Activated CD4-positive, alpha-beta T cell treated with anti-CD3 and anti-CD28 coated beads, Interleukin-2, amount 10 ng/mL, durations not matched to agents 24 days and 14 days (primary cell): ENCODE measurements at regions of chr17 and their contacts with region 1.

Region 1: DNA sequence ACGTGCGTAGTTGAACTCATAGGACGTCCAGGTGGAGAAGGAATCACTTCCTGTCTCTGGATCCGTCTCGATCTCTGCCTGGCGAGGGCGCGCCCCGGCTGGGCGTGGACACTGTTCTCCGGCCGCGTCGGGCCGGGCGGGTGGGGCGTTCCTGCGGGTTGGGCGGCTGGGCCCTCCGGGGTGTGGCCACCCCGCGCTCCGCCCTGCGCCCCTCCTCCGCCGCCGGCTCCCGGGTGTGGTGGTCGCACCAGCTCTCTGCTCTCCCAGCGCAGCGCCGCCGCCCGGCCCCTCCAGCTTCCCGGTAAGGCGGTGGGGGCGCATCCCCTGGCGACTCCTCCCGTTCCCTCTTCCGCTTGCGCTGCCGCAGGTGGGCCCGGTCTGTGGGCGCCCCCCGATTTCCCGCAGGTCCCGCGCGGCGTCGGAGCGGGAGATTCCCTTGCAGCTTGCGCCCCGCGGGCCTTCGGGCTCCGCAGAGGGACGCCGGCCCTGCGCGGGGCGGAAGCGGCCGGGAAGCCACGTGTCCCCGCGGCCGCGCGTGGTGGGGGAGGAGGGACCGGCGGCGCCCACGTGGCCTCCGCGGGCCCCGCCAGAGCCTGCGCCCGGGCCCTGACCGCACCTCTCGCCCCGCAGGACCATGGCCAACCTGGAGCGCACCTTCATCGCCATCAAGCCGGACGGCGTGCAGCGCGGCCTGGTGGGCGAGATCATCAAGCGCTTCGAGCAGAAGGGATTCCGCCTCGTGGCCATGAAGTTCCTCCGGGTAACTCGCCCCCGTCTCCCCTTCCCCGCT is at the start of gene NME2:
- DNase-seq: peak; percentile 94
- H3K4me3 Mint-ChIP-seq: peak within 1 kb of the TSS; percentile 88
- H3K27ac Mint-ChIP-seq: peak within 1 kb of the TSS; percentile 97
- H3K4me1 Mint-ChIP-seq: peaks cover 30% of the 10 kb centered on the region
- H3K27me3 Mint-ChIP-seq: no peaks in the 10 kb centered on the region
- total RNA-seq, gene NME2: 752 and 795 TPM in 2 replicates

Region 2: DNA sequence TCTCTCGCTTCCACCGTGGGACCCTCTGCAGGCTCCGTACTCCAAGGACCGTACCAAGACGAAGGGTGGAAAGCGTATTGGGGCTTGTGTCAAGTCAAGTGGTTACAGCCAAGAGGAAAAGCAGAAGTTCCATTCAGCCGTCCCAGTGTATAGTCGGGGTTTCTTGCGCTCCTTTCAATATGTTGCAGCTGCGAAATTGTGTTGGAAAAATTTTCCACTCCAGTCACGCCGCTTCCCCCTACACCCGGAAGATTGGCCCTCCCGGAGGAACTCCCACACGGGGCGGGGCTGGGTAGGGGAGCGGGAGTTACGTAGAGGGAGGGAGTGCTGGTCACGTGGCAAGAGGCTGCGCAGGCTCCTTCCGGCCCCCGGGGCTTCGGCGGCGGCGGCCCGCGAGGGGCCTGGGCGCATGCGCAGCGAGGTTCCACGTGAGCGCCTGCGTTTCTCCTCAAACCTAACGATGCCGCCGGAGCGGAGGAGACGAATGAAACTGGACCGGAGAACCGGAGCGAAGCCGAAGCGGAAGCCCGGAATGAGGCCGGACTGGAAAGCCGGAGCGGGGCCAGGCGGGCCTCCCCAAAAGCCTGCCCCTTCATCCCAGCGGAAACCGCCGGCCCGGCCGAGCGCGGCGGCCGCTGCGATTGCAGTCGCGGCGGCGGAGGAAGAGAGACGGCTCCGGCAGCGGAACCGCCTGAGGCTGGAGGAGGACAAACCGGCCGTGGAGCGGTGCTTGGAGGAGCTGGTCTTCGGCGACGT is 93.9 kb after region 1 on chr17 and contains the start of gene UTP18:
- intact Hi-C with region 1: loop called (anchors 1 kb)
- DNase-seq: peak; percentile 98
- H3K4me3 Mint-ChIP-seq: peak within 1 kb of the TSS; percentile 84
- H3K27ac Mint-ChIP-seq: peak within 1 kb of the TSS; percentile 97
- H3K4me1 Mint-ChIP-seq: peaks cover 48% of the 10 kb centered on the region
- H3K27me3 Mint-ChIP-seq: no peaks in the 10 kb centered on the region
- total RNA-seq, gene UTP18: 79.9 and 84.5 TPM in 2 replicates

Region 3: DNA sequence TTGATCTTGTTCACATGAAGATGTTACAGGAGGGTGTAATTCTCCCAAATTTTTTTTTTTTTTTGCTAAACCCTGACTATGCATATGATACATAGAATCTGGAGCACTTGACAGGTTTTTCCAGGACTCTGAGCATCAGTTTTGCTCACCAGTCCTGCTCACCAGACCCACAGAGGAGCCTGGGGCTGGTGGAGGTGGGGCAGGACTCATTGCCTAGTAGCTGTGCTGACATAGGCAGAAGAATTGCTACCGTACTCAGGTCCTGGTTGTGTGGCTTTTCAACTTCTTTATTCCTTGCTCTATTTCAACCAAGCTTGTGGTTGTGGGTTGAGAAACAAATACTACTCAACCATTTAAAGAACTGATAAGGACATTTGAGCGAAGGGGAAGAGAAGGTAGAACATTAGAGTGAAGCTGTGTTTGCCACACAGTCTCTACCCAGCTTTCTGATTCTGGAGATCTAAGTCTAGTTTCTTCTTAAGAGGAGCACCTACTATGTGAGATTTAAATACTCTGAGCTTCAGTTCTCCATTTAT is 306.3 kb after region 1 on chr17:
- intact Hi-C with region 1: no loop called
- DNase-seq: no peak
- H3K4me3 Mint-ChIP-seq: no peak overlapping the region
- H3K27ac Mint-ChIP-seq: no peak overlapping the region
- H3K4me1 Mint-ChIP-seq: no peaks in the 10 kb centered on the region
- H3K27me3 Mint-ChIP-seq: peaks cover 18% of the 10 kb centered on the region